AG04449 (cell line): ENCODE measurements at regions of chr22 and their contacts with region 1.

Region 1: DNA sequence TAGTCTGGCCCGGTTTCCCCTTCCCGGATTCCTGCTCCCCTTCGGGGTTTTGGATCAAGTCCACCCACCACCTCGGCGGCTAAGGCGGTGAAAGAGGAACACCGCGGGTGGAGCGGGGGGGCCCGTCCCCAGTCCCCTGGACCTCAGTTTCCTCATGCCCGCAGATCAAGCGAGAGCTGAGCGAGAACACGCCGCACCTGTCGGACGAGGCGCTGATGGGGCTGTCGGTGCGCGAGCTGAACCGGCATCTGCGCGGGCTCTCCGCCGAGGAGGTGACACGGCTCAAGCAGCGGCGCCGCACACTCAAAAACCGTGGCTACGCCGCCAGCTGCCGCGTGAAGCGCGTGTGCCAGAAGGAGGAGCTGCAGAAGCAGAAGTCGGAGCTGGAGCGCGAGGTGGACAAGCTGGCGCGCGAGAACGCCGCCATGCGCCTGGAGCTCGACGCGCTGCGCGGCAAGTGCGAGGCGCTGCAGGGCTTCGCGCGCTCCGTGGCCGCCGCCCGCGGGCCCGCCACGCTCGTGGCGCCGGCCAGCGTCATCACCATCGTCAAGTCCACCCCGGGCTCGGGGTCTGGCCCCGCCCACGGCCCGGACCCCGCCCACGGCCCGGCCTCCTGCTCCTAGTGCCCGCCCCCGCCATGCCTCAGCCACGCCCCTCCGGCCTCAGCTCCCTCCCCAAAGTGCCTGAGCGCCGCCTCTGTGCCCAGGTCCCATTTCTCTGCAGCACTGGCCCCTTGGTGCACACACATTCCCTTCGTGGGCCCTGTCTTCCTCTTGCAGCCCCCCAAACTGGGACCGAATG is 12.7 kb downstream of the MAFF start:
- DNase-seq: no peak
- H3K4me3 ChIP-seq: peak overlapping the region; percentile 39
- CTCF ChIP-seq: peak; percentile 16

Region 2: DNA sequence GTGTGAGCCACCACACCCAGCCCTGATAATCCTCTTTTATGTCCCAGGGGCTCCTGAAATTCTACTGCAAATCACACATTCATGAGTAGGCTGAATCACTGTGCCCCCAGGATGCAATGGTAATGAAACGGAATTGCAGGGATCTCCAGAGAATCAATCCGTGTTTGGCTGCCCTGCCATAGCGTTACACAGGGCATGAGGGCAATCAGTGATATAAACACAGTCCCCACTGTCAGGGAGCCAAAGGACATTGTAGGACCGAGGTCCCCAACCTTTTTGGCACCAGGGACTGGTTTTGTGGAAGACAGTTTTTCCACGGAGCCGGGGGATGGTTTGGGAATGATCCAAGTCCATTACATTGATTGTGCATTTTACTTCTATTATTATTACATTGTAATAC is 23.9 kb before region 1 on chr22:
- CTCF ChIA-PET with region 1: no interaction called
- POLR2A ChIA-PET with region 1: no interaction called
- DNase-seq: no peak
- H3K4me3 ChIP-seq: no peak overlapping the region
- CTCF ChIP-seq: no peak

Region 3: GRCh38 chr22:38201710-38202436 is 12.6 kb before region 1 on chr22 and contains the start of gene MAFF:
- CTCF ChIA-PET with region 1: interaction called, 5 read pairs
- POLR2A ChIA-PET with region 1: interaction called, 13 read pairs
- DNase-seq: peak; percentile 73
- H3K4me3 ChIP-seq: peak within 1 kb of the TSS; percentile 83
- CTCF ChIP-seq: no peak

Region 4: DNA sequence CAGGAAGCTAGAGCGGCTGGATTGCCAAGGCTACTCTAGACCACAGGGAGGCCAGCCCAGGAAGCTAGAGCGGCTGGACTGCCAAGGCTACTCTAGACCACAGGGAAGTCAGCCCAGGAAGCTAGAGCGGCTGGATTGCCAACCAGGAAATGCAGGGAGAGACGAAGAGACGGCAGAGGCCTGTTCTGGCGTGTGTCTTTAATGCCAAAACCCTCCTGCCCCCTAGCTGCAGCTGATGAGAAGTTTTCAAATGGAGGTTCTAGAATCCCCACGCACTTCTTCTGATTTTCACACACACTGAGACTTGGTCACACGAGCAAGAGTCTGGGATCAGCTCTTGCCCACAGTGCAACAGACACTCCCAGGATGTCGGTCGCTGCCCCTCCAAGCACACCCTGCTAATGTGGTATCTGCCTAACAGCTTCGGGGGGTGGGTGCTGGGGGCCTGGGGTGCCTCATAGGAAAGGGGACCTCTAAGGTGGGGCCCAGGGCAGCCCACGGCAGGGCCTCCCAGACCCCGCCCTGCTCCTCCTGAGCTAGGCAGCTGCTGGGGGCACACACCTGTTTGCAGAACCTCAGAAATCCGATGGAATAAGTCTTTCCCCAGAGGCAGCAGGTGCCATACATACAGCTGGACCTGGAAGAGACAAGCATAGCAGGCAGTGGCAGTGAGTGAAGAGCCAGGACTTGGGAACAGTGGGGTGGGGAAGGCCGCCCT is 15.8 kb after region 1 on chr22:
- CTCF ChIA-PET with region 1: interaction called, 15 read pairs
- POLR2A ChIA-PET with region 1: interaction called, 3 read pairs
- DNase-seq: no peak
- H3K4me3 ChIP-seq: no peak overlapping the region
- CTCF ChIP-seq: peak; percentile 25

Region 5: DNA sequence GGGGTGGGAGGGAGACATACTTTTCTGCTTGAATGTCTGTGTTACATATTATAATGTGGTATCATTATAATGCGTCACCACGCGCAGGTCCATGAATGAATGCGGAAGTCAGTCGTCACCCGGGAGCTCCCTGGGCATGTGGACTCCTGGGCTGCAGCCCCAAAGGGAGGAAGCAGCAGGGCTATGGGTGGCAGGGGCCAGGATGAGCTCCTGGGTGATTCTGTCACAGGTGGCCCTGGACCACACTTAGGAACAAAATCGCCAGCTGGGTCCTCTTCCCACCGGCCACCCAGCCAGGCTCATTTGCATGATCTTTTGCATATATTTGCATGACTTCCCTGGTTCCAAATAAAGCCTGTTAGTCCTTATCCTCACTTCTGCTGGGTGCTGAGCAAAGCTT is 189.4 kb after region 1 on chr22:
- CTCF ChIA-PET with region 1: no interaction called
- POLR2A ChIA-PET with region 1: no interaction called
- DNase-seq: no peak
- H3K4me3 ChIP-seq: no peak overlapping the region
- CTCF ChIP-seq: no peak

Region 6: DNA sequence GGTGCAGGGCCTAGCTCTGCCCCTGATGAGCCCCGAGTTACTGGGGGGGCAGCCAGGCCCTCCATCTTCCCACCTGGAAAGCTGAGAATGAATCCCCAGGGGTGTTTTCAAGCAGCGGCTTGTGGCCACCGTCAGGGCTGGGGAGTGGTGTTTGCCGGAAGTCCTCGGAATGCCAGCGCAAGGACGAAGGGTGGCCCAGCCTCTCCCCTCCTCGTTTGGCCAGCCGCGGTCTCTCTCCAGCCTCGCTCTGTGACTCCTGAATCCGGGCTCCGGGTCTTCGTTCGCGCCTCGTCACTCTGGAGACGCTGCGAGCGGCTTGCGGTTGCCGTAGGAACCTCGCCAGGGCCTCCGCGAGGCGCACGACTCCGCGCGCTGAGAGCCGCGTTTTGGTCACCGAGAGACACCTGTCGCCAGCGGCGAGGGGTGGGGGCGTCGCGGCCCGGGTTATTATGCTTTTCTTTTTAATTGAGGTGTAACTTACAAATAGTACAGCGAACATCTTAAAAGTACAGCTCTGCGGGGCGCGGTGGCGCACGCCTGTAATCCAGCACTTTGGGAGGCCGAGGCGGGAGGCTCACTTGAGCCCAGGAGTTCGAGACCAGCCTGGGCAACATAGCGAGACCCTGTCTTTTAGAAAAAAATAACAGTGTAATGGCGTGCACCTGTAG is 247.1 kb after region 1 on chr22:
- CTCF ChIA-PET with region 1: no interaction called
- POLR2A ChIA-PET with region 1: no interaction called
- DNase-seq: no peak
- H3K4me3 ChIP-seq: no peak overlapping the region
- CTCF ChIP-seq: no peak